ENCODE measurements at regions of chr3 and their contacts with region 1.

Region 1: DNA sequence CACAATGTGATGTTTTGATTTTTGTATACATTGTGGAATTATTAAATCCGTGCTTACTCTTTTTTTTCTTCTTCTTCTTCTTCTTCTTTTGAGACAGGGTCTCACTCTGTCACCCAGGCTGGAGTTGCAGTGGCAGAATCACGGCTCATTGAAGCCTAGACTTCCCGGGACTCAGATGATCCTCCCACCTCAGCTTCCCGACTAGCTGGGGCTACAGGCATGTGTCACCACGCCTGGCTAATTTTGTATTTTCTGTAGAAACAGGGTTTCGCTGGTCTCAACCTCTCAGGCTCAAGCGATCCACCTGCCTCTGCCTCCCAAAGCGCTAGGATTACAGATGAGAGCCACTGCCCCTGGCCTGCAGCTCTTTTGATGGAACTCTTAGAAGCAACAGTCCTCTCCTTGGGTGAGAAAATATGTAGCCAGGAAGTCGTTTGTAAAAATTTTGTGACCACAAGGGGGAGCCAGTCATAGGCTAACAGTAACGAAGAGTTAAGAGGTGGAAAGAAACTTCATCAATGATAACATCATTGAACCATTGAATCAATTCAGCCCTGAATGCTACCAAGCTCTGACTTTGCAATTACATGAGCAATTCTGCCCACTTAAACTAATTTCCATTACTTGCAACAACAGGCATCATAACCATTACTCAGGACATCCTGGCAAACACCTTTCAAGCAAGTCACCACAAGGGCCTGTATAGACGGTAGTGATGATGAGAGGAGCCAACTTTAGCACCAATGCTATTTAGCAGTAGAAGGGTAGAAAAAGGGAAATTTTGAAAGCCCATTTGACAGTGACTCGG is 16.7 kb upstream of the CMTM7 start:
- DNase-seq: peak in 8 of 9 donors; percentile 50 to 83 (median 77)
- ATAC-seq: peak; percentile 67
- H3K4me3 ChIP-seq: no peak overlapping the region
- H3K4me3 Mint-ChIP-seq: peak overlapping the region in 1 of 10 donors; percentile 37
- H3K27ac ChIP-seq: no peak overlapping the region
- H3K27ac Mint-ChIP-seq: peak overlapping the region; percentile 54 to 97 (median 87)
- H3K4me1 ChIP-seq: peaks cover 0 to 34% of the 10 kb centered on the region in 2 donors
- H3K4me1 Mint-ChIP-seq: peaks cover 15 to 49% (median 38%) of the 10 kb centered on the region in 7 donors
- H3K27me3 ChIP-seq: no peaks in the 10 kb centered on the region
- H3K27me3 Mint-ChIP-seq: peaks cover 0 to 4% (median 0%) of the 10 kb centered on the region in 5 donors

Region 2: DNA sequence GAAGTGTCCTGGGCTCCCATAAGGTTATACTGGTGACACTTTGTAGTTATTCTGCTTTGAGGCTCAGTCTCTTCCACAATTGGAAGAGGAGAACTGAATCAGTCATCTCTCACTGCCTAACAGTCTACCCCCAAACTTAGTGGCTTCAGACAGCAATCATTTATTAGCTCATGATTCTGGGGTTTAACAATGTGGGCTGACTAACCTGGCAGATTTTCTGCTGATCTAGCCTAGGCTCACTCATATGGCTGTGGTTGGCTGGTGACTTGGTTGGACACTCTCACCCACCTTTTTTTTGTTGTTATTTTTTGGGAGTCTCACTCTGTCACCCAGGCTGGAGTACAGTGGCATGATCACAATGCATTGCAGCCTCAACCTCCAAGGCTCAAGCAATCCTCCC is 261.4 kb before region 1 on chr3:
- CTCF ChIA-PET with region 1: no interaction called
- POLR2A ChIA-PET with region 1: interaction called, 3 read pairs
- intact Hi-C with region 1: loop called in 1 of 2 experiments (anchors 1 kb)
- DNase-seq: no peak
- ATAC-seq: no peak
- H3K4me3 ChIP-seq: no peak overlapping the region
- H3K4me3 Mint-ChIP-seq: peak overlapping the region in 8 of 10 donors; percentile 70 to 90 (median 82)
- H3K27ac ChIP-seq: no peak overlapping the region
- H3K27ac Mint-ChIP-seq: peak overlapping the region in 8 of 9 donors; percentile 74 to 95 (median 92)
- H3K4me1 ChIP-seq: peaks cover 18 to 25% of the 10 kb centered on the region in 2 donors
- H3K4me1 Mint-ChIP-seq: peaks cover 32 to 95% (median 82%) of the 10 kb centered on the region in 7 donors
- H3K27me3 ChIP-seq: no peaks in the 10 kb centered on the region
- H3K27me3 Mint-ChIP-seq: no peaks in the 10 kb centered on the region

Region 3: GRCh38 chr3:32391643-32392535 is 16.9 kb after region 1 on chr3 and contains the start of gene CMTM7:
- CTCF ChIA-PET with region 1: interaction called, 56 read pairs
- POLR2A ChIA-PET with region 1: interaction called, 33 read pairs
- intact Hi-C with region 1: loop called in 1 of 2 experiments (anchors 1 kb)
- DNase-seq: peak; percentile 33 to 68 (median 62)
- ATAC-seq: peak; percentile 75
- H3K4me3 ChIP-seq: peak within 1 kb of the TSS; percentile 81
- H3K4me3 Mint-ChIP-seq: peak within 1 kb of the TSS; percentile 84 to 99 (median 98)
- H3K27ac ChIP-seq: peak within 1 kb of the TSS; percentile 83
- H3K27ac Mint-ChIP-seq: peak within 1 kb of the TSS; percentile 93 to 100 (median 98)
- H3K4me1 ChIP-seq: peaks cover 17 to 25% of the 10 kb centered on the region in 2 donors
- H3K4me1 Mint-ChIP-seq: peaks cover 30 to 70% (median 55%) of the 10 kb centered on the region in 7 donors
- H3K27me3 ChIP-seq: no peaks in the 10 kb centered on the region
- H3K27me3 Mint-ChIP-seq: no peaks in the 10 kb centered on the region
- total RNA-seq, gene CMTM7: 38.6 to 60.1 (median 49.5) TPM

Region 4: DNA sequence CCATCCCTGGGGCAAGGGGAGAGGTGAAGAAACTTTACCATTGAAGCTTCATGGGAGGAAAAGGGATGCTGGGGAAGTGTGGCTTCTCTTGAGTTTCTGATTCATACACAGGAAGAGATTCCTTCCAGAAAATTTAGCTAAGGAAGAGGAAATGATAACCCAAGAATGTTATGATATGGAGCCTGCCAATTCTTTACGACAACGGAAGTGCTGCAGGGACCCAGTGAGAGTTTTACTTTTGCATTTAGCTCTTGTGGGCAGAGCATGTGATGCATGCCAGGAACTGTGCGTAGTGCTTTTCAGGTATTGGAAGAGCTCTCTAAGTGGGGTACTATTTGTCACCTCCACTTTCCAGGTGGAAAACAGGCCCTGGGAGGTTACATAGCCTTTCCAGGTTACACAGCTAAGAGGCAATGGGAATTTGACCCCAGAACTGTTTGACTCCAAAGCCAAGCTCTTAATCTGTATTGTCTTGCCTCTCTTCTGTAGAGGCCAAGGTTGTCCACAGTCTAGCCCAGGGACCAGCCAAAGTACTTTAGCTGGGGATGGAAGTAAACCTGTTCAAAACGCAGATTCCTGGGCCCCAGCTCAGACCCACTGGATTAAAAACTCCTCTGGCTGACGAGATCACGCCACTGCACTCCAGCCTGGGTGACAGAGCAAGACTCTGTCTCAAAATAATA is 39.7 kb after region 1 on chr3:
- CTCF ChIA-PET with region 1: interaction called, 14 read pairs
- POLR2A ChIA-PET with region 1: interaction called, 5 read pairs
- intact Hi-C with region 1: loop called in 1 of 2 experiments (anchors 5 kb)
- DNase-seq: peak in 7 of 9 donors; percentile 61 to 78 (median 69)
- ATAC-seq: peak; percentile 94
- H3K4me3 ChIP-seq: no peak overlapping the region
- H3K4me3 Mint-ChIP-seq: peak overlapping the region; percentile 56 to 78 (median 68)
- H3K27ac ChIP-seq: peak overlapping the region; percentile 81
- H3K27ac Mint-ChIP-seq: peak overlapping the region; percentile 93 to 99 (median 98)
- H3K4me1 ChIP-seq: peaks cover 17 to 65% of the 10 kb centered on the region in 2 donors
- H3K4me1 Mint-ChIP-seq: peaks cover 52 to 96% (median 89%) of the 10 kb centered on the region in 7 donors
- H3K27me3 ChIP-seq: no peaks in the 10 kb centered on the region
- H3K27me3 Mint-ChIP-seq: no peaks in the 10 kb centered on the region

Region 5: DNA sequence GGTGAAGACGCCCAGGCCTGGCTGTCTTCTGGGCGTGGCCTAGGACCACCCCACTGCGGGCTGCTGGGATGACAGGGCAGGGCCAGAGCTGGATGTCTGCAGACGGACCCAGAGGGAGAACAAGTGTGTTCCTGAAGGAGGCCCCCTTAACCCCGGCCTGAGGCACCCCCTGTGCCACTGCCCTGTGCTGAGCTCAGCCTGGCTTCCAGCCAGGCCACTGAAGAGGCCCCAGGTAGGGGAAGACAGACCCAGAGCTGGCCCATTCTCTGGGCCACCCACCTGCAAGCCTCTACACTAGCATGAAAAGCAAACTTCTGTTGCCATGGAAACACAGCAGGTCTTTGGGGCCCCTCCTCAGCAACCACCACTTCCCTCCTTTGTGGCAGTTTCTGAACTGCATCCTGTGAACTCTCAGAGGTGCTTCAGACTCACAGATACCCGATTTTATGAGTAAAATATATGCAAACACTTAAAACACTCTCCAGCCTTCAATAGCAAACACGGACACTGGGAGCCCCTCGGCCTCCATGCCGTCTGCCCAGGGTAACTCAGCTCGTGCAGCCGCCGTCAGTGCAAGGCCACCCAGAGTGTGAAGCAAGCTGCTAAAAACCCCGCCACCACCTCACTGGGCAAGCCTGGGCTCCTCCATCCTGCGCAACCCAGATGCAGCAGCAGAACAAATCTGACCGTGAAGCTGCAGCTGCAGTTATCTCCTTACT is 85.2 kb after region 1 on chr3:
- CTCF ChIA-PET with region 1: interaction called, 14 read pairs
- POLR2A ChIA-PET with region 1: interaction called, 23 read pairs
- intact Hi-C with region 1: loop called in 1 of 2 experiments (anchors 1 kb)
- DNase-seq: peak; percentile 52 to 95 (median 94)
- ATAC-seq: peak; percentile 87
- H3K4me3 ChIP-seq: peak overlapping the region; percentile 34
- H3K4me3 Mint-ChIP-seq: peak overlapping the region in 5 of 10 donors; percentile 25 to 92 (median 87)
- H3K27ac ChIP-seq: peak overlapping the region; percentile 97
- H3K27ac Mint-ChIP-seq: no peak overlapping the region
- H3K4me1 ChIP-seq: peaks cover 71 to 77% of the 10 kb centered on the region in 2 donors
- H3K4me1 Mint-ChIP-seq: peaks cover 30 to 45% (median 33%) of the 10 kb centered on the region in 7 donors
- H3K27me3 ChIP-seq: no peaks in the 10 kb centered on the region
- H3K27me3 Mint-ChIP-seq: no peaks in the 10 kb centered on the region

Region 6: GRCh38 chr3:32667122-32667521 is 292.1 kb after region 1 on chr3:
- CTCF ChIA-PET with region 1: no interaction called
- POLR2A ChIA-PET with region 1: no interaction called
- intact Hi-C with region 1: loop called in 1 of 2 experiments (anchors 2 kb)
- DNase-seq: no peak
- ATAC-seq: no peak
- H3K4me3 ChIP-seq: no peak overlapping the region
- H3K4me3 Mint-ChIP-seq: no peak overlapping the region
- H3K27ac ChIP-seq: no peak overlapping the region
- H3K27ac Mint-ChIP-seq: no peak overlapping the region
- H3K4me1 ChIP-seq: no peaks in the 10 kb centered on the region
- H3K4me1 Mint-ChIP-seq: no peaks in the 10 kb centered on the region
- H3K27me3 ChIP-seq: no peaks in the 10 kb centered on the region
- H3K27me3 Mint-ChIP-seq: peaks cover 0 to 13% (median 0%) of the 10 kb centered on the region in 5 donors

Region 7: GRCh38 chr3:34005886-34006285 is 1630.9 kb after region 1 on chr3:
- CTCF ChIA-PET with region 1: no interaction called
- POLR2A ChIA-PET with region 1: no interaction called
- intact Hi-C with region 1: no loop called
- DNase-seq: no peak
- ATAC-seq: no peak
- H3K4me3 ChIP-seq: no peak overlapping the region
- H3K4me3 Mint-ChIP-seq: no peak overlapping the region
- H3K27ac ChIP-seq: no peak overlapping the region
- H3K27ac Mint-ChIP-seq: no peak overlapping the region
- H3K4me1 ChIP-seq: no peaks in the 10 kb centered on the region
- H3K4me1 Mint-ChIP-seq: no peaks in the 10 kb centered on the region
- H3K27me3 ChIP-seq: no peaks in the 10 kb centered on the region
- H3K27me3 Mint-ChIP-seq: peaks cover 0 to 5% (median 0%) of the 10 kb centered on the region in 5 donors

Measured in naive thymus-derived CD4-positive, alpha-beta T cell (primary cell).